PC-9 (cell line): ENCODE measurements at regions of chr14 and their contacts with region 1.

Region 1: DNA sequence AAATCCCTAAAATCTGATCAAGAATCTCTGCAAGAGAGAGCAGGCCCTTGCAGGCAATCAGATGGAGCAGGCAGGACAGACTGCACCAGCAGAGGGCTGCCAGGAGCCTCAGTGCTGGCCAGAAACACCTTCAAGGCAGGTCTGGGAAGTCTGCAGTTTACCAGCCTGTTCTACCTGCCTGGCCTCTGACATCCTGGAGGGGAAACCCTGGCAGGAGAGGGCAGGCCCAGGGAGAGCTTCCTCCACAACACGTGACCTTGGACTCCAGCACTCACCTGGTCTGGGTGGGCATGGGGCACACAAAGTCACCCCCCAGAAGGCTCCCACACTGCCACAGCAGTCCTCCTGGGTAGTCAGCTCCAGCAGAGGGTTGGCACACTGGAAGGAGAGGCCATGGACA is 56.0 kb downstream of the ISCA2 start:
- DNase-seq: peak; percentile 74 to 85
- H3K4me3 ChIP-seq: no peak overlapping the region
- H3K27ac ChIP-seq: peak overlapping the region; percentile 14
- H3K4me1 ChIP-seq: peaks cover 13% of the 10 kb centered on the region
- H3K27me3 ChIP-seq: no peaks in the 10 kb centered on the region
- CTCF ChIP-seq: peak; percentile 88

Region 2: DNA sequence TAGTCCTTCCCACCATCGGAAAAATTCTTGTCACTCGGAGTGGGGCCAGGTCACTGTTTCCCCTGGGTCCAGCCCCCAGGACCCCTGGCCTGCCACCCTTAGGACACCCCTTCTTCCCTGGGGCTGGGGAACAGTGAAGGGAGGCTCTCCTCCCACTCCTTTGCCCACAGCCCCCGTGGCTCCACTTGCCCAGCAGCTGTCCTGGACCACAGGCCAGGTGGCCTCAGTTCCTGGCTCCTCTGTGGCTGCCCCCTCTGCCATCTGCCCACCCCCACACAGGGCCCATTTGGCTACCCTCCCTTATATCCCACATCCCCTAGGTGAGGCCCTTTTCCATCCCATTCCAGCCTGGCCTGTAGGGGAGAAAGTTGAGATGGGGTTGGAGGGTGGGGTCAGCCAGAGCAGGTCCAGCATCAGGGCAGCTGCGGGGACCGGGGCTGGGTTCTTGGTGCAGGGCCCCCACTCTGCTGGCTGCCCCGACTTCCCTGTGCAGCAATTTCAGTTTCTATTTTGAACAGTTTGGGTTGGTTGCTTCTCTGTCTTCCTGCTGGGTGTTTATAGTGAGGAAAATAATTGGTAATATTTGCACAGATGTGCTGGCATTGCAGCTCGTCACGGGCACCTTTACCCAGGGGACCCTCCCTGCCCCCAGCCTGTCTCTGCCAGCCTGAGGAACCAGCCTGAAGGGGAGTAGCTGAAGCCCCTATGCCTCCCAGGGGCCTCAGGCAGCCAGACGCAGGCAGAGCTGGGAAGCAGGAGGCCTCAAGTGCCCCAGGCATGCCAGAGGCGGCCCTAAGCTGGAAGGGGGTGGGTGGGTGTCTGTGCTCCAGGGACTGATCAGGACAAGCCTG is 147.0 kb before region 1 on chr14:
- CTCF ChIA-PET with region 1: no interaction called
- POLR2A ChIA-PET with region 1: no interaction called
- intact Hi-C with region 1: no loop called
- DNase-seq: no peak
- H3K4me3 ChIP-seq: no peak overlapping the region
- H3K27ac ChIP-seq: peak overlapping the region; percentile 76
- H3K4me1 ChIP-seq: peaks cover 32% of the 10 kb centered on the region
- H3K27me3 ChIP-seq: no peaks in the 10 kb centered on the region
- CTCF ChIP-seq: no peak

Region 3: GRCh38 chr14:74579447-74580274 is 30.1 kb after region 1 on chr14:
- CTCF ChIA-PET with region 1: no interaction called
- POLR2A ChIA-PET with region 1: no interaction called
- intact Hi-C with region 1: loop called (anchors 1 kb)
- DNase-seq: peak; percentile 84 to 98
- H3K4me3 ChIP-seq: no peak overlapping the region
- H3K27ac ChIP-seq: peak overlapping the region; percentile 94
- H3K4me1 ChIP-seq: peaks cover 85% of the 10 kb centered on the region
- H3K27me3 ChIP-seq: no peaks in the 10 kb centered on the region
- CTCF ChIP-seq: no peak

Region 4: DNA sequence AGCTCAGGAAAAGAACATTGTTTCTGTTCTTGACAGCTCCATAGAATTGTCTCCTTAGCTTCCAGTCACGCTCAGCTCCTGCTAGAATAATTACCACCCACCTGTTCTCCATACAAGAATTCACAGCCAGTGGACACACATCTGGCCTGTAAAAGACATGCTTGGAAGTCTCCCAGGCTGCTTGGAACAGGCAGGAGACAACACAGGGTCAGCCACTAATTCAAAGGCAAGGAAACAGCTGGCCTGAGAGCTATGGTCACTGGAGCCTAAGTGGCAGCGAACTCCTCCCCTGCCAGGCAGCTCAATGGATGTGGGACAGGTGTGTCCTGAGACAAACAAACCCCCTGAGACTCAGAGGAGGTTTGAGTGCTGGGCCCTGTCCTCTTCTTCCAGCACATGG is 85.4 kb after region 1 on chr14:
- CTCF ChIA-PET with region 1: no interaction called
- POLR2A ChIA-PET with region 1: interaction called, 33 read pairs
- intact Hi-C with region 1: no loop called
- DNase-seq: no peak
- H3K4me3 ChIP-seq: no peak overlapping the region
- H3K27ac ChIP-seq: no peak overlapping the region
- H3K4me1 ChIP-seq: peaks cover 9% of the 10 kb centered on the region
- H3K27me3 ChIP-seq: no peaks in the 10 kb centered on the region
- CTCF ChIP-seq: no peak

Region 5: DNA sequence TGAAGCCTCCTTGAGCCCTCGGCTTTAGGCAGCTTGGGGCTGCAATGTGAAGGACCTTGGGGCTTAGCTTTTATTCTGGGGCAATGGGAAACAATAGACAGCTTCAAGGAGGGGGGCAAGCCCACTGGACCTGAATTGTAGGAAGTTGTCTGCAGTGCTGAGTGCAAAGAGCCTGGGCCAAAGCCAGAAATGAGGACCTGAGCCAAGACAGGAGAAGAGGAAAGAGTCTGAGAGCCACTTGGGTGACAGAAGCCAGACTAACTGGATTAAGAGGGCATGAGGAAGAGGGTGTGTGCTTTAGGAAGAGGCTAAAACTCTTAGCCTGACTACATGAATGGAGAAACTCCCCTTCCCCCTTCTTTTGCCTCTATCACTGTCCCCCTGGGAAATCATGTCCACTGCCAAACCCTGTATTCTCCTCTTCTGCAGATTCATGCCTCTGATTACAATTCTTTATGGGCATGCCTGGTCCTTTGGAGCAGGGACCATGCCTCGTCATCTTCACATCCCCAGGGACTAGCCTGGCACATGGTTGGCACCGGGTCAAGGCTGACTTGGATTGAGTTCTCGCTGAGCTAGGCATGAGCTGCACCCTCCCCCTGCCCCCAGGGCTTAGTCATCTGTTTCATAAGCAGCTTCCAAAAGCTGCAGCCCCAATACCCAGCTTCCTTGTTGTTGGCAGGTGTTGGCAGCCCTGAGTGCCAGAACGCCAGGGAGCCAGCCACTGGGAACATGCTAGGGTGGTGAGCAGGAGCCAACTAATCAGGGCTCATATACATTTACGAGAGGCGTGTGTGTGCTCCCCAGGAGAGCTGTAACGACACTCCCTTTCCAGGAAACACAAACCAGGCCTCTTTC is 850.5 kb after region 1 on chr14:
- CTCF ChIA-PET with region 1: no interaction called
- POLR2A ChIA-PET with region 1: no interaction called
- intact Hi-C with region 1: no loop called
- DNase-seq: peak; percentile 100
- H3K4me3 ChIP-seq: peak overlapping the region; percentile 17; the same call in 1 of the 2 replicates
- H3K27ac ChIP-seq: peak overlapping the region; percentile 70
- H3K4me1 ChIP-seq: peaks cover 31% of the 10 kb centered on the region
- H3K27me3 ChIP-seq: no peaks in the 10 kb centered on the region
- CTCF ChIP-seq: no peak